Esophagus muscularis mucosa (tissue), 4 donors: ENCODE measurements at regions of chr1 and their contacts with region 1.

Region 1: DNA sequence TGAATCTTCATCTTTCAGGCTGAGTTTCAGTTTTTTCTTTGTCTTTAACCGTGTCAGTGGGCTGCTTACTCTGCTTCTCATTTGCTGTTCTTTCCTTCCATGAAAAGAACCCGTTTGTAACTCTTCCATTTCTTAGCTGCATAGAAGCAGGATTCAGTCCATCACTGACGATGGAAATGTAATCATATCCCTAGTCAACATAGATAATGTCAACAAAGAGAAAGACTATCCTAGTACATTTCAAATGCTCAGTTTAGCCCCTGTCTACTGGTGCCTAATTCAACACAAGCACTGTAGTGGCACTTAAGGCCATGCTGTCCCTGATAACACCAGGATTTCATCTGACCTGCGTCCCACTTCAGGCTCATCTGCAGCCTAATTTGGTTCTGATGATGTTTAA is 376 bp downstream of the GBP1 start:
- DNase-seq: no peak
- H3K4me3 ChIP-seq: peak overlapping the region; percentile 56 to 70 (median 63)
- H3K27ac ChIP-seq: peak overlapping the region; percentile 84 to 86 (median 86)
- H3K4me1 ChIP-seq: peaks cover 20 to 47% (median 43%) of the 10 kb centered on the region in 4 donors
- H3K27me3 ChIP-seq: no peaks in the 10 kb centered on the region
- CTCF ChIP-seq: no peak
- EP300 ChIP-seq: no peak
- POLR2A ChIP-seq: no peak

Region 2: DNA sequence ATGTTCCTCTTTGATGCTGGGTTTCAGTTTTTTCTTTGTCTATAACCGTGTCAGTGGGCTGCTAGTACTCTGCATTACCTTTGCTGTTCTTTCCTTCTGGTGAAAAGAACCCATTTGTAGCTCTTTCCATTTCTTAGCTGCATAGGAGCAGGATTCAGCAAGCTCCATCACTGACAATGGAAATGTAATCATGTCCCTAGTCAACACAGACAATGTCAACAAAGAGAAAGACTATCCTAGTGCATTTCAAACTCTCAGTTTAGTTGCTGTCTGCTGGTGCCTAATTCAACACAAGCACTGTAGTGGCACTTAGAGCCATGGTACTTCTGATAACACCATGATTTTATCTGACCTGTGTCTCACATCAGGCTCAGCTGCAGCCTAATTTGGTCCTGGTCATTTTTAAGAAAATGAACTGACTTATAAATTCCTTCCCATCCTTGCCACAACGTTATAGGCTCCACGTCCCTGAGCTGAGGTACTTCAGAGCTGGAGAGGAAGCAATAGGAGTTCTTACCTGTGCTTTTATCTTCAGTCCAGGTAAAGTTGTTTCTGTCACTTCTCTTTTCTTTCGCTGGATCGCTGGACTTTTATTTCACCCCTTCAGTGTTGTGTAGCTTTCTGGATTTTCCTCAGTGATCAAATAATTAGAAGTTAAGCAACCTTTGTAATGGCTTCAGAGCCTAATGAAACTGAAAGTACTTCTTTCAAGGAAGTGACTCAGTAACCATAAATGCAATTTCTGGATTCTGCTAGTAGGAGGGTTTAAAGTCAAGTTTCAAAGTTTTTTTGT is 42.3 kb before region 1 on chr1 and contains the start of gene GBP3:
- intact Hi-C with region 1: loop called (anchors 5 kb)
- DNase-seq: no peak
- H3K4me3 ChIP-seq: peak within 1 kb of the TSS; percentile 51 to 63 (median 52)
- H3K27ac ChIP-seq: peak within 1 kb of the TSS; percentile 75 to 83 (median 79)
- H3K4me1 ChIP-seq: peaks cover 13 to 25% (median 25%) of the 10 kb centered on the region in 4 donors
- H3K27me3 ChIP-seq: no peaks in the 10 kb centered on the region
- CTCF ChIP-seq: no peak
- EP300 ChIP-seq: no peak
- POLR2A ChIP-seq: no peak
- total RNA-seq, gene GBP3: 11.9 to 21.1 (median 16.1) TPM

Region 3: DNA sequence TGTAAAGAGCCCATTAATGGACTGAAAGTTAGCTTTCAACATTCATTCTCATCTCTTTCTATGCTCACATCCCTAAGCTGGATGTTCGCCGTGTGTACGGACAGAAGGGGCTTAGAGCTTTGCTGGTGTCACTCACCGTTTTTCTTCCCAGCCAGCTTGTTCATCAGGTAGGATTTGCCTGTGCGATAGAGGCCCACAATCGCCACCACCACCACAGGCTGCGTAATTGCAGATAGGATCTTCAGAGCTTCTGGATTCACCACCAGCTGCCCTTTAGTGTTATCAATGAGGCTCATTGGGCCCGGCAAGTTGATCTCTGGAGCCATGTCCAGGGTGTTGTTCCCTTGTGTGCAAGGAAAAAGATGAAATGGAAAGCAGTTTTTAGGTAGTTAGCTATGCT is 57.0 kb after region 1 on chr1:
- intact Hi-C with region 1: loop called (anchors 5 kb)
- DNase-seq: no peak
- H3K4me3 ChIP-seq: no peak overlapping the region
- H3K27ac ChIP-seq: peak overlapping the region in 2 of 4 donors; percentile 14 to 86
- H3K4me1 ChIP-seq: peaks cover 9 to 40% (median 34%) of the 10 kb centered on the region in 4 donors
- H3K27me3 ChIP-seq: no peaks in the 10 kb centered on the region
- CTCF ChIP-seq: no peak
- EP300 ChIP-seq: no peak
- POLR2A ChIP-seq: no peak